Activated CD8-positive, alpha-beta T cell treated with anti-CD3 and anti-CD28 coated beads for 36 hours (primary cell): ENCODE measurements at regions of chr10 and their contacts with region 1.

Region 1: DNA sequence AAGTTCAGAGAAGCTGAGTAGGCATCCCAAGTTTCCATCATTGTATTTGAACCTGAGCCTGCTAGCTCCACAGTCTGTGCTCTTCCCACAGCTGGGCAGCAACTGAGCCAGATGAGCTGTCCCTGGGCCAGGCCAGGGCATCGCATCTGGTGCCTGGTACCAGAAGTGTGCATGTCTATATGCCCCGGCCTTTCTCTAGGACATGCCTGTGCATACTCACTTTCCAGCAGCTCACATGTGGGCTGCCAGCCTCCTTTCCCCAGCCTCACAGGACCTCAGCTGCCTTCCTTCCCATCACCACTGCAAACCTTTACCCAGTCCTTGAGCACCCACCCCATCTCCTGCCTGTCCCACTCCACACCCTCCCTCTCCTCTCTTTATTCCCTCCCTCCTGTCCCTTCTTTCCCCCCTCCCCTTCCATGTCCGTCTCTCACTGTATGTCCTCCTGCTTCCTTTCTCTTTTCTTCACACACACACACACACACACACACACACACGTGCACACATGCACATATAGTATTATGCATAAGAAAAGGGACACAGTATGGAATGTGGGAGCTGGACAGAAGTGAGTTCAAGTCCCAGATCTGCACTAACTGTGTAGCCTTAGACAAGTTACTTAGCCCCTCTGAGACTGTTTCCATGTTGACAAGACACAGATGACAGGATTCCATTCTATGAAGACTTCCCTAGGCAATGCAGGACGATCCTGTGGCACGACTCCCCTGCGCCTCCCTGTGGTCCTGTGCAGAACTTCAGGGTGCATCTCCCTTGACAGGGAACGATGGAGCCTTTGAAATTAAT is 10.9 kb downstream of the CDHR1 start:
- DNase-seq: peak; percentile 84
- ATAC-seq: peak; percentile 98
- H3K4me3 Mint-ChIP-seq: no peak overlapping the region
- H3K27ac Mint-ChIP-seq: no peak overlapping the region
- H3K4me1 Mint-ChIP-seq: no peaks in the 10 kb centered on the region
- H3K27me3 Mint-ChIP-seq: peaks cover 3% of the 10 kb centered on the region
- CTCF ChIP-seq: peak; percentile 79

Region 2: GRCh38 chr10:84139126-84140035 is 65.9 kb before region 1 on chr10 and contains the start of gene GHITM:
- CTCF ChIA-PET with region 1: interaction called, 10 read pairs
- POLR2A ChIA-PET with region 1: no interaction called
- intact Hi-C with region 1: no loop called
- DNase-seq: peak; percentile 100
- ATAC-seq: peak; percentile 96
- H3K4me3 Mint-ChIP-seq: peak within 1 kb of the TSS; percentile 91
- H3K27ac Mint-ChIP-seq: peak within 1 kb of the TSS; percentile 99
- H3K4me1 Mint-ChIP-seq: peaks cover 32% of the 10 kb centered on the region
- H3K27me3 Mint-ChIP-seq: no peaks in the 10 kb centered on the region
- CTCF ChIP-seq: peak; percentile 39
- total RNA-seq, gene GHITM: 198 TPM

Region 3: DNA sequence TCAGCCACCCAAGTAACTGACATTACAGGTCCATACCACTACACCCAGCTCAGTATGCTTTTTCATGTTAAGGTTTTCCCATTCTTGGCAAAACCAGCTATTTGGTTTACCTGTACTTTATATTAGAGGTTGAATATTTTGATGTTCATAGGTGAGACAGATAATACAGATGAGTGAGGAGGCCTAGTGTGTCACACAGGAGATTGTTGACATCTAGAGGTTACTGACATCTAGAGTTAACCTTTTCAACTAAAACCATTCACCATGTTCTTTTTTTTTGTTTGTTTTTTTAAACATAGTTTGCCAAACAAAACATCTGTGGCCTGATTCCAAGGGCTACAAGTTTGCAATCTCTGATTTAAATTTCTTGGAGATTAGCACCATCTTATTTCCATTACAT is 57.9 kb before region 1 on chr10:
- CTCF ChIA-PET with region 1: interaction called, 71 read pairs
- POLR2A ChIA-PET with region 1: no interaction called
- intact Hi-C with region 1: loop called (anchors 5 kb)
- DNase-seq: no peak
- ATAC-seq: no peak
- H3K4me3 Mint-ChIP-seq: no peak overlapping the region
- H3K27ac Mint-ChIP-seq: no peak overlapping the region
- H3K4me1 Mint-ChIP-seq: peaks cover 24% of the 10 kb centered on the region
- H3K27me3 Mint-ChIP-seq: no peaks in the 10 kb centered on the region
- CTCF ChIP-seq: no peak

Region 4: DNA sequence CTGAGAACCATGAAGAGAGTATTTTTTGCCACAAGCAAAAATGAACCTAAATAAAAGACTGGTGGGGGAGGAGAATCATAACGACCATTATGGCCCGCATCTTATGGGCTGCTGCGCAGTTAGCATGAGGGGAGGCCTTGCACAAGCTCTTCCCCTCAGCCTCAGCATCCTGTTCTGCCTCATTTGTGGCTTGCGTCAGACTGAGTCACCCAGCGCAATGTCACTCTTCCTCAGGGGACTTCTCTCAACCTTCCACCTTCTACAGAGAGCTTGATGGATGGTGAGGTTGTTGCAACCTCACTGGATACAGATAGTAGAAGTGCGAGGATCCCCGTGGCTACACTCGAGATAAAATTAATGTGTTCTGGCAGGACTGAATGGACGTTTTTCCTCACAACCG is 48.5 kb before region 1 on chr10:
- CTCF ChIA-PET with region 1: interaction called, 12 read pairs
- POLR2A ChIA-PET with region 1: no interaction called
- intact Hi-C with region 1: loop called (anchors 5 kb)
- DNase-seq: peak; percentile 83
- ATAC-seq: peak; percentile 99
- H3K4me3 Mint-ChIP-seq: no peak overlapping the region
- H3K27ac Mint-ChIP-seq: peak overlapping the region; percentile 54
- H3K4me1 Mint-ChIP-seq: peaks cover 48% of the 10 kb centered on the region
- H3K27me3 Mint-ChIP-seq: no peaks in the 10 kb centered on the region
- CTCF ChIP-seq: no peak

Region 5: DNA sequence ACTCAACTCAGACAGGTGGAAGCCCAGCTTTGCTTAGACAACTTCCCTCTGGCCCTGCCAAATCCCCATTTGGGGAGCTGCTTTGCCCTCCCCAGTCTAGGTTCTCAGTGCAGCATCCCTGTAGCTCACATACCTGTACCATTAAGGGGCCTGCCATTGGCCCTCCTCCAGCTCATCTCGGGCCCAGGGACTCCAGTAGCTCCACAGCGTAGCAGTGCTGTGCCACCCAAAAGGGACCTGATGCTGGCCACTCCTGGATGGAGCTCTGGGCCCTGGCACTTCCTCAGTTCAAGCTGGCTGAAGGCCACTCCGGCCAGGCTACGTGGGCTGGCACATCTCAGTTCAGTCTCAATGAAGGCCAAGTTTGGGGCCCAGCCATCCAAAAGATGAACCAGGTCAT is 28.7 kb after region 1 on chr10:
- CTCF ChIA-PET with region 1: no interaction called
- POLR2A ChIA-PET with region 1: no interaction called
- intact Hi-C with region 1: no loop called
- DNase-seq: no peak
- ATAC-seq: no peak
- H3K4me3 Mint-ChIP-seq: no peak overlapping the region
- H3K27ac Mint-ChIP-seq: no peak overlapping the region
- H3K4me1 Mint-ChIP-seq: no peaks in the 10 kb centered on the region
- H3K27me3 Mint-ChIP-seq: peaks cover 30% of the 10 kb centered on the region
- CTCF ChIP-seq: no peak